ENCODE measurements at regions of chr20 and their contacts with region 1.

Region 1: DNA sequence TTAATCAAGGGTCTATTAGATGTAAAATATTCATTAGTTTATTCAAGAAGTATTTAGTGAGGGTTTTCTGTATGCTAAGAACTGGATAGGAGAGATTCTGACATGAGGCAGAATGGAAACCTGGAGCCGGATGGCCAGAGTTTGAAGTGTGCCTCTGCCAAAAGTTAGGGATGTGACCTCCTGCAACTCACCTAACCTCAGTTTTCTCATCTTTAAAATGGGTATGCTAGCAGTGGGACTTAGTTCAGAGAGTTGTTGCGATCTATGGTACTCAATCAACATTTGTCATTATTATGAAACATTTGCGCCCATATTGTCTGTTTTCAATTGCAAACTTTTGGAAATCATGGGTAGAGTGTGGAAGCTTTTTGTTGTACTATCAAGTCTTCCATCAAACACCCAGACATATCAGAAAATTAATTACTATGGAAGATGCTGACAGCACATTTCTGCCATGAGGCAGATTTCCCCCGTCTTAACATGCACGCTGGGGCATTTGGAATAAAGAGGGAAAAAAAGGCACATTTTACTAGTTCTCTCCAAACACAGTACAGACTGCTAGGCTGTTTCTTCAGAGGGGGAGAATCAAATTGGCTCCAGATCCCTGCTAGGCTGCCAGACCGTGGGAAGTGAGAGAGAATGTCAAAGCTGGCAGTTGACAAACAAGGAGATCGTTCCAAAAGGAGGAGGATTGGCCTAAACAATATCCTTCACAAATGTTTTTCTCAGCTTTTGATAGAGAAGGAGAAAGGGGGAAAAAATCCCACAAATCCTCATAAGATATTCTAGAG is 205.3 kb upstream of the TSHZ2 start:
- ATAC-seq: no peak
- H3K4me3 ChIP-seq: no peak overlapping the region
- H3K27ac ChIP-seq: no peak overlapping the region
- H3K4me1 ChIP-seq: peaks cover 3 to 12% of the 10 kb centered on the region in 2 donors

Region 2: DNA sequence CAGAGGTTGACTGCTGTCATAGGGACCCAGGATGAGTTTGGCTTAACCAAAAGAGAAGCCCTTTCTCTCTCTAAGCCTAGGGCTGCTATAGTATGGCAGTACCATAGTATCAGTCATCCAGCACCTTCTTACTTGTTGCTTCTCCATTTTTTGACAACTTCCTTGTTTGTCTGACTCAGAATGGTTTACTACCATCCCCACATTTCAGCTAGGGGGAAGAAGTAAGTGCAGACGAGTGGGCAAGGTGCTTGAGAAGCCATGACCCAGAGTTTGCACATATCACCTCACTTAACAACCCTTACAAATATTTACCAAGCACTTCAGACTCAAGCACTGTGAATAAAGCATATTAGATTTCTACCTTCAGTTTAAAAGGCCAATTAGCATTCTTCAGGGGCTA is 84.6 kb before region 1 on chr20:
- in situ Hi-C with region 1: no loop called
- ATAC-seq: no peak
- H3K4me3 ChIP-seq: no peak overlapping the region
- H3K27ac ChIP-seq: no peak overlapping the region
- H3K4me1 ChIP-seq: peaks cover 16 to 18% of the 10 kb centered on the region in 2 donors

Region 3: GRCh38 chr20:52926505-52926904 is 159.7 kb after region 1 on chr20:
- in situ Hi-C with region 1: no loop called
- ATAC-seq: no peak
- H3K4me3 ChIP-seq: no peak overlapping the region
- H3K27ac ChIP-seq: no peak overlapping the region
- H3K4me1 ChIP-seq: peaks cover 10 to 23% of the 10 kb centered on the region in 2 donors

Region 4: DNA sequence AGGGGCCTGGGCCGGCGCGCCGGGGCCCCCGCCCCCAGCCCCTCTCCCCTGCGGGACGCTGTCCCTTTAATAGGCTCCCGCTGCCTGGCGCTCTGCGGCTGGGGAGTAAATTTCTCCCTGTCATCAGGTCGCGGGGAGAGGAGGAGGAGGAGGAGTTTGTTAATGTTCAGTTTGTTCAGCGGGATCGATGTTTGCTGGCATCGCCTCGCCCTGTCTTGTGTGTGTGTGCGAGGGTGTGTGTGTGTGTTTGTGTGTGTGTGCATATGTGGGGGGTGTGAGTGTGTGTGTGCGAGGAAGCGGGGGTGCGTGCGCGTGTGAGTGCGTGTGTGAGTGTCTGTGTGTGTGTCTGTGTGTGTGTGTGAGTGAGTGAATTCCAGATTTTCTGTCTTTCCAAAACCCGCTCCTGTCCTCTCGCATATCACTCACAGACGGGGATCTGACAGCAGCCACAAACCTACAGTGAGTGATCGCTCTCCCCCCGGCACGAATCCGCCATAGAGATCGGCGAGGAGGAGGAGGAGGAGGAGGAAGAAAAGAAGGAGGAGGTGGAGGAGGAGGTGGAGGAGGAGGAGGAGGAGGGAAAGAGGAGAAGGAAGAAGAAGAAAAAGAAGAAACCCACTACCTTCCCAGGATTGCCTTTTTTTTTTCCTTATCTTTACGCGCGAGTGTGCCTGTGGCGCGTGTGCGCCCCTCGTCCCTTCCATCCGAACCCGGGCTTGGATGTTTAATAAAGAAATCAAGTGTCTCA is 205.5 kb after region 1 on chr20 and contains the start of gene TSHZ2:
- in situ Hi-C with region 1: loop called in 2 of 9 experiments (anchors 25 kb)
- ATAC-seq: peak; percentile 76 to 87 (median 82)
- H3K4me3 ChIP-seq: peak within 1 kb of the TSS; percentile 40 to 81 (median 49)
- H3K27ac ChIP-seq: peak within 1 kb of the TSS; percentile 34 to 84
- H3K4me1 ChIP-seq: peaks cover 7 to 11% of the 10 kb centered on the region in 2 donors
- total RNA-seq, gene TSHZ2: 11.4 to 125 (median 47.7) TPM

Measured in motor neuron (in vitro differentiated cells).